Head of caudate nucleus (tissue), 42 donors: ENCODE measurements at regions of chr4 and their contacts with region 1.

Region 1: DNA sequence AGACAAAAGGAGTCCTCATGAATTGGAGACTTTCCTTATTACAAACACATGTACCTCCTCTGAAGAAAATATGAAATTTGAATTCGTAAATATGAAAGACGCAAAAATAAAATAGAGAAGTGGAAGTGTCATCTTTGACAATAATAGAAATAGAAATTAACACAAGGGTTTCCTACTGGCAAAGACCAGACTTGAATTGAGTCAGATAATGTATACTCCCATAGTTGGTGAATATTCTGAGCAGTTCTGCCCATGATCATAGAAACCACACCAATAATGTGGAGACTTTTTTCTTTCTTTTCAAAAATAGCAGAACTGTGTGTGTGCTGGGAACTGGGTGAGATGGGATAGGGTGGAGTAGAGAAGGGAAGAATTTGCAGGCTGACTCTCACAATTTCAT is 277.7 kb upstream of the TET2 start:
- DNase-seq: no peak

Region 2: GRCh38 chr4:104015680-104016253 is 853.2 kb before region 1 on chr4:
- intact Hi-C with region 1: loop called (anchors 5 kb)
- DNase-seq: peak in 33 of 42 donors; percentile 10 to 71 (median 41)